CD4-positive, alpha-beta T cell (primary cell): ENCODE measurements at regions of chr7 and their contacts with region 1.

Region 1: DNA sequence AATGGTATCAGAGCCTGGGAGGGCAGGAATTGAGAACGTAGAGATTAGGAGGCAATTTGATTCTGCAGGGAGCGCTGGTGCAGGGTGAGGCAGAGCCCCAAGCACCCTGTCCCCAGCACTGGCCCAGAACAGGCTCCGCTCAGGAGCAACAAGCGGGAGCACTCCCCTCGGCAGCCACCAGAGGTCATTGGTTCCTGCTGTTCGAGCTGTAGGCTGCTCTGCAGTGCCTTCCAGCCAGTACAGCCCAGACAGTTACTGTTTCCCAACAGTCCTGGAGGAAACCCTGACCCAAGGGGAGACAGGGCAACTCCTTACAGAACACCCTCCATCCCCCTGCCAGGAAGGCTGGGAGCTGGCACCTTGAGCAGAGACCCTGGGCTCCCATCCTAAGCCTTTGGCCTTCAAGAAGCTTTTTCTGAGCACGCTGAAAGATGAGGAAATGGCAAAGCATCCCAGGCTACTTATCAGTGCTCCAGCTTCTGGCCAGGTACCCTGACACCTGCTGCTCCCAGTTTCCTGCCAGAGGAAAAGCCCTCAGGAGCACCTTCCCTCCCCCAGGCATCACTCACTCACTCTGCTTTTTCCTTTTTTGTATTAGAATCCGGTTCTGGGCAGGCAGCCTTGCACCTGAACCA is 71.2 kb upstream of the EFCAB10 start:
- DNase-seq: peak; percentile 55 to 74 (median 66)
- ATAC-seq: peak; percentile 94
- H3K4me3 ChIP-seq: no peak overlapping the region
- H3K4me3 Mint-ChIP-seq: no peak overlapping the region
- H3K27ac ChIP-seq: no peak overlapping the region
- H3K27ac Mint-ChIP-seq: no peak overlapping the region
- H3K4me1 ChIP-seq: peaks cover 10% of the 10 kb centered on the region
- H3K4me1 Mint-ChIP-seq: peaks cover 11% of the 10 kb centered on the region
- H3K27me3 ChIP-seq: no peaks in the 10 kb centered on the region
- H3K27me3 Mint-ChIP-seq: no peaks in the 10 kb centered on the region
- CTCF ChIP-seq: peak; percentile 75

Region 2: GRCh38 chr7:104185346-104185745 is 1467.1 kb before region 1 on chr7:
- CTCF ChIA-PET with region 1: no interaction called
- POLR2A ChIA-PET with region 1: no interaction called
- intact Hi-C with region 1: no loop called
- DNase-seq: no peak
- ATAC-seq: no peak
- H3K4me3 ChIP-seq: no peak overlapping the region
- H3K4me3 Mint-ChIP-seq: no peak overlapping the region
- H3K27ac ChIP-seq: no peak overlapping the region
- H3K27ac Mint-ChIP-seq: no peak overlapping the region
- H3K4me1 ChIP-seq: no peaks in the 10 kb centered on the region
- H3K4me1 Mint-ChIP-seq: no peaks in the 10 kb centered on the region
- H3K27me3 ChIP-seq: no peaks in the 10 kb centered on the region
- H3K27me3 Mint-ChIP-seq: no peaks in the 10 kb centered on the region
- CTCF ChIP-seq: no peak

Region 3: DNA sequence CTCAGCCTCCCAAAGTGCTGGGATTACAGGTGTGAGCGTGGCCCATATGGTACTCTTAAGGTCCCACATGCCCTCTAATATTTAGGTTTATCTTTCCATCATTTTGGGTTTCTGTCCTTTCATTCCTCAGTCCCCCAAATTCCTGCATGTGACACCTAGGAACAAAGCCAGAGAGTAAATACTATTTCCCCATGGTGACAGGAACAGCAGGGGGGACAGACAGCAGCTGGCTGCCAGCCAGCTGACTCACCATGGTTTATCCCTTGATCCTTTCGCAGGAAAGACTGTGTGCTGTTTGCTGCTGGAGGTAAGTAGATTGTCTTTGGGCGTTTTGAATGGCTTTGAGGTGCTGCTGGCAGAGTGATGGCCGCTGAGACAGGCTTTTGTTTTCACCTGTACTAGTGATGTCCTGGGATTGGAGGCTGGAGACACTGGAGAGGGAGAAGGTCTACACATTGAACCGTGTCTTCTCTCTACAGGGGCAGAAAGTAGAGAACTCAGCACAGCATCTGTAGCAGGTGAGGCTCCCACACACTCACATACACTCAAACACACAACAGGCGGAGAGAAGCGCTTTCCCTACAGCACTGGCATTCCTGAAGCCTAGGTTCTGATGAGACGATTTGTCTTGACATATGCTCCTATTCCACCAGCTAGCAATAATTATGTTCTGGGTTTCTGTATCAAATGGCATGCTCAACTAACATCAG is 12.5 kb after region 1 on chr7:
- CTCF ChIA-PET with region 1: no interaction called
- POLR2A ChIA-PET with region 1: interaction called, 3 read pairs
- intact Hi-C with region 1: loop called in 1 of 2 experiments (anchors 1 kb)
- DNase-seq: no peak
- ATAC-seq: no peak
- H3K4me3 ChIP-seq: no peak overlapping the region
- H3K4me3 Mint-ChIP-seq: no peak overlapping the region
- H3K27ac ChIP-seq: no peak overlapping the region
- H3K27ac Mint-ChIP-seq: no peak overlapping the region
- H3K4me1 ChIP-seq: peaks cover 5% of the 10 kb centered on the region
- H3K4me1 Mint-ChIP-seq: peaks cover 3% of the 10 kb centered on the region
- H3K27me3 ChIP-seq: no peaks in the 10 kb centered on the region
- H3K27me3 Mint-ChIP-seq: no peaks in the 10 kb centered on the region
- CTCF ChIP-seq: no peak

Region 4: DNA sequence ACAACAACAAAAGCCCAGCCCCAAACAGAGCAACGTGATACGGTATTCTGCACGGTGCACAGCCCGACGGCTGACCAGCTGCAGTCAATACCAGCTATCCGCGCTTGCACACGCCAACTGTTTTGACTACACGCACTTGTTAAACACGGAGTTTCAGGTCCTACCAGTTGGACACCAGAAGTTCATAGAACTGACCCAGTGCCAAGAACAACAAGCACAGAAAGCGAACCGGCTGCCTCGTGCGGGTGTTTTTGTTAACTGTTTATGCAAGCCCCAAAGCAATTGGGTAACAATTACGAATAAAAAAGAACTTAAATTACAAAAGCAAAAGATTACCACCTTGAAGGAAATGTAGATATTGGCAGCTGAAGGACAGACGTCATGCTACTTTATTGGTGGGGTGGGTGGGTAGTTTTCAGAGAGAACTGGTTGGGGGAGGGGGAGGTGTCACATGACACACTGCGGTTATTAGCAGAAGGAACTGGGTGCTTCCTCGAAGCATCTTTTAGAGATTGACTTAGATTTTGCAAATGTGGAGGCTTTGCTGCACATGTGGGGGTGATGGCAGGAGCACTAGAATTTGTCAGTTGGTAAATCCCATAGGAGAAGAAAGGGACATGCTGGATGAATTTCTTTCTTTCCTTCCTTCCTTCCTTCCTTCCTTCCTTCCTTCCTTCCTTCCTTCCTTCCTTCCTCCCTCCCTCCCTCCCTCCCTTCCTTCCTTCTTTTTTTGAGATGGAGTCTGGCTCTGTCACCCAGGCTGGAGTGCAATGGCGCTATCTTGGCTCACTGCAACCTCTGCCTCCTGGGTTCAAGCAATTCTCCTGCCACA is 39.5 kb after region 1 on chr7:
- CTCF ChIA-PET with region 1: interaction called, 4 read pairs
- POLR2A ChIA-PET with region 1: interaction called, 5 read pairs
- intact Hi-C with region 1: loop called (anchors 1 to 5 kb)
- DNase-seq: peak; percentile 50 to 94 (median 68)
- ATAC-seq: peak; percentile 82
- H3K4me3 ChIP-seq: peak overlapping the region; percentile 92
- H3K4me3 Mint-ChIP-seq: peak overlapping the region; percentile 87
- H3K27ac ChIP-seq: peak overlapping the region; percentile 94 to 97
- H3K27ac Mint-ChIP-seq: peak overlapping the region; percentile 98
- H3K4me1 ChIP-seq: peaks cover 53% of the 10 kb centered on the region
- H3K4me1 Mint-ChIP-seq: peaks cover 62% of the 10 kb centered on the region
- H3K27me3 ChIP-seq: no peaks in the 10 kb centered on the region
- H3K27me3 Mint-ChIP-seq: no peaks in the 10 kb centered on the region
- CTCF ChIP-seq: no peak

Region 5: DNA sequence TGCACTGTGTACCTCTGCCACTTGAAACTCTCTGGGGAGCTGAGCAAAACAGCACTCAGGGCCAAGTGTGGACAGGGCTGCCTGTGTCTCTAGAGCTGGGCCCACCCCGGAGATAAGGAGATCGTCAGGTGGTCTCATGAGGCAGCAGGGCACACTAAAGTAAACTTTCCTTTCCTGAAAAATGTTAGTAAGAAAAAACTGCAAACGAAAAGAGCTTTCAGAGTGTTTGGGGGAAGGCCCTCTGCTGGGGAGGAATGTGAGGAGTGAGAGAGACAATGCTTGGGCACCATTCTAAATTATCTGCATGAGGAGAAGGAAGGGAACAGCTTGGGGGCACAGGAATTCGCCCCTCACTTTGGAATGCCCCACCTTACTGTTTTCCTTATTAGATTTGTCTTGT is 96.2 kb after region 1 on chr7:
- CTCF ChIA-PET with region 1: interaction called, 10 read pairs
- POLR2A ChIA-PET with region 1: no interaction called
- intact Hi-C with region 1: no loop called
- DNase-seq: no peak
- ATAC-seq: no peak
- H3K4me3 ChIP-seq: no peak overlapping the region
- H3K4me3 Mint-ChIP-seq: no peak overlapping the region
- H3K27ac ChIP-seq: no peak overlapping the region
- H3K27ac Mint-ChIP-seq: no peak overlapping the region
- H3K4me1 ChIP-seq: no peaks in the 10 kb centered on the region
- H3K4me1 Mint-ChIP-seq: no peaks in the 10 kb centered on the region
- H3K27me3 ChIP-seq: no peaks in the 10 kb centered on the region
- H3K27me3 Mint-ChIP-seq: no peaks in the 10 kb centered on the region
- CTCF ChIP-seq: no peak

Region 6: GRCh38 chr7:106009403-106010226 is 357.1 kb after region 1 on chr7:
- CTCF ChIA-PET with region 1: interaction called, 5 read pairs
- POLR2A ChIA-PET with region 1: no interaction called
- intact Hi-C with region 1: loop called (anchors 1 to 2 kb)
- DNase-seq: peak; percentile 70 to 91 (median 78)
- ATAC-seq: peak; percentile 97
- H3K4me3 ChIP-seq: no peak overlapping the region
- H3K4me3 Mint-ChIP-seq: peak overlapping the region; percentile 16
- H3K27ac ChIP-seq: no peak overlapping the region
- H3K27ac Mint-ChIP-seq: peak overlapping the region; percentile 38
- H3K4me1 ChIP-seq: peaks cover 21% of the 10 kb centered on the region
- H3K4me1 Mint-ChIP-seq: peaks cover 51% of the 10 kb centered on the region
- H3K27me3 ChIP-seq: no peaks in the 10 kb centered on the region
- H3K27me3 Mint-ChIP-seq: no peaks in the 10 kb centered on the region
- CTCF ChIP-seq: peak; percentile 99

Region 7: GRCh38 chr7:106153891-106154449 is 501.5 kb after region 1 on chr7:
- CTCF ChIA-PET with region 1: interaction called, 3 read pairs
- POLR2A ChIA-PET with region 1: no interaction called
- intact Hi-C with region 1: loop called (anchors 2 to 5 kb)
- DNase-seq: peak; percentile 62 to 85 (median 69)
- ATAC-seq: peak; percentile 98
- H3K4me3 ChIP-seq: no peak overlapping the region
- H3K4me3 Mint-ChIP-seq: no peak overlapping the region
- H3K27ac ChIP-seq: no peak overlapping the region
- H3K27ac Mint-ChIP-seq: no peak overlapping the region
- H3K4me1 ChIP-seq: peaks cover 5% of the 10 kb centered on the region
- H3K4me1 Mint-ChIP-seq: peaks cover 5% of the 10 kb centered on the region
- H3K27me3 ChIP-seq: peaks cover 0 to 6% of the 10 kb centered on the region in 2 experiments
- H3K27me3 Mint-ChIP-seq: peaks cover 28% of the 10 kb centered on the region
- CTCF ChIP-seq: peak; percentile 92